Activated CD4-positive, alpha-beta T cell treated with anti-CD3 and anti-CD28 coated beads for 36 hours (primary cell): ENCODE measurements at regions of chr1 and their contacts with region 1.

Region 1: GRCh38 chr1:23559136-23559984 is at the start of gene ID3:
- DNase-seq: peak; percentile 96
- ATAC-seq: peak; percentile 71
- H3K4me3 Mint-ChIP-seq: peak within 1 kb of the TSS; percentile 94
- H3K27ac Mint-ChIP-seq: peak within 1 kb of the TSS; percentile 79
- H3K4me1 Mint-ChIP-seq: peaks cover 58% of the 10 kb centered on the region
- H3K27me3 Mint-ChIP-seq: peaks cover 5% of the 10 kb centered on the region
- total RNA-seq, gene ID3: 42.6 to 43.9 TPM

Region 2: DNA sequence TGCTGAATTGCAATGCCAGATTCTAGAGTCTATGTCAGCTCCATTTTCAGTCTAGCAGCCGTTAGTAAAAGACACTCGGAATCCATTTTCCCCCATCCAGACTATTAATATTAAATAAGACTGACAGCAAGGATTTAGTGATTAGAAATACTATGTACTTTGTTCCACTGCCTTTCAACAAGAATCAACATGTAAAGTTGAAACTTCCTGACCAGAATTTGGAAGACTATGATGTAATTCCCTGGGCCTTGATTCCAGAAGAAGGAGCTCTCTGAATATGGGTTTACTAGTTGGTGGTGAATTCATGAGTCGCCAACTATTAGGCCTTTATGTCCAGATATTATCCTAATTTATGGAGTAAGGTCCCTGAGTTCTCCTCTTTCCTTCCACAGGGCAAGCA is 515.3 kb before region 1 on chr1:
- CTCF ChIA-PET with region 1: no interaction called
- POLR2A ChIA-PET with region 1: no interaction called
- intact Hi-C with region 1: no loop called
- DNase-seq: no peak
- ATAC-seq: no peak
- H3K4me3 Mint-ChIP-seq: no peak overlapping the region
- H3K27ac Mint-ChIP-seq: no peak overlapping the region
- H3K4me1 Mint-ChIP-seq: peaks cover 33% of the 10 kb centered on the region
- H3K27me3 Mint-ChIP-seq: no peaks in the 10 kb centered on the region

Region 3: DNA sequence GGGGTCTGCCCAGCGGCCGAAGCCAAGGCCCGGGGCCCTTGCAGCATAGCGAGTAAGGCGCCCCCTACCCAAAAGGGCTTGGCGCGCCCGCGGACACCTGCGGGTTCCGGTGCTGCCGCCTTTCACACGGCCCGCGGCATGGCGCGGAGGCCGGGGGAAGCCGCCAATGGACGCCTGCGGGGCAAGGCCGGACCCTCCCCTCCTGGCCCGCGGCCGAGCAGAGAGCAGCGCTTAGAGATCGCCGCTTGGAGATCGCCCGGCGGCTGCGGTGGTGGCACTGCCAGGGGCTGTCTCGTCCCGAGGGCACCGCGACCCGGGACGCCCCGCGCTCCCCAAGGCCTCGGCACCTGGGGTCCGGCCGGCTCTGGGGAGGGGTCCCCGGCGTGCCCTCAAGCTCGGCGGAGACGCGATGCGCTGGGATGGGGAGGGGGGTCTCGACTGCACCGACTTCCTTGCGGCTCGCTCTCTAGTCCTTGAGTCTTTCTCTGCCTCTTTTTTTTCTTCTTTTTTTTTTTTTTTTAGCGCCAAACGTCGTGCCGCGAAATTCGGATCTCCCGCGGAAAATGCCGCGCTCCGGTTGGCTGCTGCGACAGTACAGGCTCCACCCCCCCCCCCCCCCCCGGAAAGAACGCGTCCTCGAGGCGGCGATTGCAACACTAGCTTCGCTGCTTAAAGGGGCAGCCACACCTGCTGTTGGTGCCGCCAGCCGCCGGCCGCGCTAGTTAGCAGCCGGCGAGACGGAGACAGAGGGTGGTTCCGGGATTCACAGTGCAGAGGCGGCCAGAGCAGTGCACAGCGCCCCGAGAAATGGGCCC is 28.4 kb before region 1 on chr1 and contains the start of gene E2F2:
- CTCF ChIA-PET with region 1: interaction called, 7 read pairs
- POLR2A ChIA-PET with region 1: interaction called, 8 read pairs
- intact Hi-C with region 1: loop called in 1 of 2 experiments (anchors 1 kb)
- DNase-seq: peak; percentile 91
- ATAC-seq: peak; percentile 81
- H3K4me3 Mint-ChIP-seq: peak within 1 kb of the TSS; percentile 84
- H3K27ac Mint-ChIP-seq: peak within 1 kb of the TSS; percentile 95
- H3K4me1 Mint-ChIP-seq: peaks cover 68% of the 10 kb centered on the region
- H3K27me3 Mint-ChIP-seq: no peaks in the 10 kb centered on the region
- total RNA-seq, gene E2F2: 25.0 to 32.0 TPM

Region 4: GRCh38 chr1:23577056-23578004 is 18.0 kb after region 1 on chr1:
- CTCF ChIA-PET with region 1: interaction called, 8 read pairs
- POLR2A ChIA-PET with region 1: interaction called, 7 read pairs
- intact Hi-C with region 1: loop called (anchors 1 to 2 kb)
- DNase-seq: peak; percentile 73
- ATAC-seq: peak; percentile 98
- H3K4me3 Mint-ChIP-seq: peak overlapping the region; percentile 8
- H3K27ac Mint-ChIP-seq: peak overlapping the region; percentile 79
- H3K4me1 Mint-ChIP-seq: peaks cover 47% of the 10 kb centered on the region
- H3K27me3 Mint-ChIP-seq: no peaks in the 10 kb centered on the region

Region 5: GRCh38 chr1:23613191-23614031 is 54.1 kb after region 1 on chr1:
- CTCF ChIA-PET with region 1: interaction called, 3 read pairs
- POLR2A ChIA-PET with region 1: interaction called, 3 read pairs
- intact Hi-C with region 1: loop called (anchors 1 to 2 kb)
- DNase-seq: peak; percentile 80
- ATAC-seq: peak; percentile 66
- H3K4me3 Mint-ChIP-seq: peak overlapping the region; percentile 10
- H3K27ac Mint-ChIP-seq: peak overlapping the region; percentile 77
- H3K4me1 Mint-ChIP-seq: peaks cover 78% of the 10 kb centered on the region
- H3K27me3 Mint-ChIP-seq: no peaks in the 10 kb centered on the region